Endothelial cell of umbilical vein (primary cell): ENCODE measurements at regions of chr11 and their contacts with region 1.

Region 1: DNA sequence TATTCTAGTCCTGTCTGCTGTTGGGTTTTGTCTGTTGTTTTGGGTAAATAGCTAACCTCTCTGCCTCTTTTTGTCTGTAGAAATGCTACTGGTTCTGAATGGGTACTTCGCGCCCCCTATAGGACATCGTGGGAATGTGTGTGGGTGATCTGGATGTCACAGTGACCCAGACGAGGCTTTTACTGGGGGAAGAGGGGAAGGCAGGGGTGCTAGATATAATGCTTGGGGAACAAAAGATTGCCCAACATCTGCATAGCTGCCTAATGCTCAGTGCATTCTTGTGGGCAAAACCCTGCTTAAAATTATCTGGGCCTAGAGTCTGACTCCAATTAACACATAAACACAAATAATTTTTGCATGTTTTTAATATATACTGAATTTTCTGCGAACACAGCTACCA is 57.7 kb downstream of the BMAL1 start:
- DNase-seq: peak; percentile 61
- H3K4me3 ChIP-seq: no peak overlapping the region
- H3K27ac ChIP-seq: no peak overlapping the region
- H3K4me1 ChIP-seq: peaks cover 27% of the 10 kb centered on the region
- H3K27me3 ChIP-seq: no peaks in the 10 kb centered on the region
- CTCF ChIP-seq: peak; percentile 82 to 91
- POLR2A ChIP-seq: no peak

Region 2: DNA sequence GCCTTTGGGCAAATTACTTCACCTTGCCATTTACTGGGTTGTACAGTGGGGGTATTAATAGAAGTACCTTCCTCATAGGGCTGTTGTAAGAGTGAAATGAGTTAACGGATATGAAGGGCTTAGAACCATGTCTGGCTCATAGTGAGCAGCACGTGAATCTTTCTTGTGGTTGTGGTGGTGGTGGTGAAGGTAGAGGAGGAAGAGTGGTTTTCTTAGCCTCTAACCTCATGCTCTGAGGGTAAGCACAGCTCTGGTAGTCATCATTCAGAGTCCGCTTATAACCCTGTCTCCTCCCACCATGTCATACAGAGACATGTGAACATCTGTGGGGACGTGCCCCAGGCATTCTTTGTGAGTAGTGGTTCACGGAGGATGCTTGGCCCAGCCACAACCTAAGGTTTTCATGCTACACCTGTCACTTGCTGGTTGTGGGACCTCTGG is 617.4 kb before region 1 on chr11:
- CTCF ChIA-PET with region 1: no interaction called
- POLR2A ChIA-PET with region 1: no interaction called
- dilution Hi-C with region 1: no loop called
- intact Hi-C with region 1: no loop called
- DNase-seq: no peak
- H3K4me3 ChIP-seq: no peak overlapping the region
- H3K27ac ChIP-seq: no peak overlapping the region
- H3K4me1 ChIP-seq: peaks cover 19% of the 10 kb centered on the region
- H3K27me3 ChIP-seq: no peaks in the 10 kb centered on the region
- CTCF ChIP-seq: no peak
- POLR2A ChIP-seq: no peak

Region 3: GRCh38 chr11:13105237-13105844 is 230.0 kb before region 1 on chr11:
- CTCF ChIA-PET with region 1: no interaction called
- POLR2A ChIA-PET with region 1: no interaction called
- dilution Hi-C with region 1: no loop called
- intact Hi-C with region 1: loop called (anchors 5 kb)
- DNase-seq: peak; percentile 99
- H3K4me3 ChIP-seq: peak overlapping the region in 1 of 3 experiments; percentile 0
- H3K27ac ChIP-seq: peak overlapping the region; percentile 60
- H3K4me1 ChIP-seq: peaks cover 39% of the 10 kb centered on the region
- H3K27me3 ChIP-seq: no peaks in the 10 kb centered on the region
- CTCF ChIP-seq: no peak
- POLR2A ChIP-seq: peak; percentile 70

Region 4: DNA sequence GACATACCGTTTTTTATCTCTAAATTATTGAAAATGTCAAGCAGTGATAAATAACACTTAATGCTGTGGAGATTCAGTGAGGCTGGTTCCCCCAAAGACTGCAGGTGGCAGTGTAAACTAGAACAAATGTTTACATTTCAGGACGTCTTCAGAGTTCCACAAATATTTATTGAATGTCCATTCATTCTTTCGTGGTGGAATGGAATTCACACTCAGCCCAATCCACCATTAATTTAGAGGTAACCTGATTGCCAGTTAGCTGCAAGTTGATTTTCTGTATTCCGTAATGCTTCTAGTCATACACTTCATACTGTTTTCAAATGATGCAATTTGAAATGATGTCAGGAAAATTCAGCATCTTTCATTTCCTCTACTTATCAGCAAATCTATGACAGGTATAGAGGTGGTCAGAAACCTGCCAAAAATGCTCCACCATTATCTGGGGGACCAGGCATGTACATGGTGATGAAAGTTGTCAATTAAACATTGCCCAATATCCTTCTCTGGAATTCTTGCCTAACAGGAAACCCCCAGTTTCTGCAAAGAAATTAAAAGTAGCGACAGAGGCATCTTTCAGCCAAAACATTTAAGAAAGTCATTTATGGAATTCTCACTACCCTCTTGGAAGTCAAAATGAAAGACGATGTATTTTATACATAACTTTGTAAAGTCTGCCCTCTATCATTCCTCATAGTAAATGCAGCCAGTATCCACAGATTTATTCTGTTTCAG is 152.1 kb before region 1 on chr11:
- CTCF ChIA-PET with region 1: interaction called, 4 read pairs
- POLR2A ChIA-PET with region 1: no interaction called
- dilution Hi-C with region 1: no loop called
- intact Hi-C with region 1: loop called (anchors 2 kb)
- DNase-seq: peak; percentile 56
- H3K4me3 ChIP-seq: no peak overlapping the region
- H3K27ac ChIP-seq: no peak overlapping the region
- H3K4me1 ChIP-seq: peaks cover 6% of the 10 kb centered on the region
- H3K27me3 ChIP-seq: peaks cover 8 to 12% of the 10 kb centered on the region in 2 experiments
- CTCF ChIP-seq: peak; percentile 34 to 46
- POLR2A ChIP-seq: no peak

Region 5: DNA sequence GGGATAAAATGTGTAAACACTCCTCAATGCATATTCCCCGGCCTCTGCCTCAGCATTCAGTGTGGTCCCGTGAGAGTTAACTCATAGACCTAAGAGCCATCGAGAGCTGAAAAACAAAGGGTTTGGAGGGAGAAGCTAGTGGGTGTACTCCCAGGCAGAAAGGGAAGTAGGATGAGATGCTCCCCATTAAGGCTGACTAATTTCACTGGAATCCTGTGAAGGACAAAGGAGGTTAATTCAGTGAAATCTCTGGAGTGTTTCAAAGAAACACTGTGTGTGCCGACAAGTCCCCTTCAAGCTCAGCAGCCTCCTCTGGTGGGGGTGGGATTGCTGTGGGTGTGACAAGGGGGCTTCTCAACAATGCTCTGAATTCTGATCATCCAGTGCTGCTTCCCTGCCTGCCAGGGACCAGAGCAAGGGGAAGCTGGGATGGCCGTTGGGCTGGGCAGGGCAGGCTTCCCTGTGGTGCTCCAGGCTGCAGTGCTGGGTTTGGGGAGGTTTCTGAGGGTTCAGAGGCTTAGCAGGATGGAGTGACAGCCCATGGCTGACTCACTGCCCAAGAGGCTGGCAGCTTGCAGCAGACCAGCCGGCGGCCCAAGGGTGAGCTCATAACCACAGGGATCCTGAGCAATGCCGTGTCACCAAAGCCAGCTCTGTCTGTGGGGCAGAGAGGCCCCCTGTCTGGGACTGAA is 119.2 kb before region 1 on chr11:
- CTCF ChIA-PET with region 1: interaction called, 136 read pairs
- POLR2A ChIA-PET with region 1: no interaction called
- dilution Hi-C with region 1: no loop called
- intact Hi-C with region 1: loop called (anchors 1 kb)
- DNase-seq: peak; percentile 66
- H3K4me3 ChIP-seq: peak overlapping the region in 1 of 3 experiments; percentile 17
- H3K27ac ChIP-seq: peak overlapping the region; percentile 99
- H3K4me1 ChIP-seq: peaks cover 20% of the 10 kb centered on the region
- H3K27me3 ChIP-seq: no peaks in the 10 kb centered on the region
- CTCF ChIP-seq: no peak
- POLR2A ChIP-seq: peak; percentile 53

Region 6: DNA sequence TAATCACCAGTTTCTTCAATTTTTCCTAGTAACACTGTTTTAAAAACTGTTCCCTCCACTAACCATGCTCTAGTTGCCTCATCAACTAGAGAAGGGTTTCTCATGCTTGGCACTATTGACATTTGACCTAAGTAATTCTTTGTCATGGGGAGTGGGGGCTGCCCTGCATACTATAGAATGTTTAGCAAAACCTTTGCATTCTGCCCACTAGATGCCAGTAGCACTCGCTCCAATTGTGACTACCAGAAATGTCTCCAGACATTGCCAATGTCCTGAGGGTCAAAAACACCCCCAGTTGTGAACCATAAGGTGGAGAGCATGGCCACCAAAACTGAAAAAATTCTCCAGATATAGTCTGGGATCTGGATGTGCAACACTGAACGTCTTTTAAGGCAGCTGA is 85.3 kb before region 1 on chr11:
- CTCF ChIA-PET with region 1: interaction called, 22 read pairs
- POLR2A ChIA-PET with region 1: no interaction called
- dilution Hi-C with region 1: no loop called
- intact Hi-C with region 1: loop called (anchors 1 kb)
- DNase-seq: peak; percentile 3
- H3K4me3 ChIP-seq: no peak overlapping the region
- H3K27ac ChIP-seq: no peak overlapping the region
- H3K4me1 ChIP-seq: no peaks in the 10 kb centered on the region
- H3K27me3 ChIP-seq: peaks cover 24 to 25% of the 10 kb centered on the region in 2 experiments
- CTCF ChIP-seq: no peak
- POLR2A ChIP-seq: no peak

Region 7: GRCh38 chr11:13276832-13277767 is 58.2 kb before region 1 on chr11:
- CTCF ChIA-PET with region 1: interaction called, 7 read pairs
- POLR2A ChIA-PET with region 1: no interaction called
- dilution Hi-C with region 1: no loop called
- intact Hi-C with region 1: loop called (anchors 2 kb)
- DNase-seq: peak; percentile 98
- H3K4me3 ChIP-seq: peak overlapping the region; percentile 60 to 88 (median 81)
- H3K27ac ChIP-seq: no peak overlapping the region
- H3K4me1 ChIP-seq: peaks cover 13% of the 10 kb centered on the region
- H3K27me3 ChIP-seq: peaks cover 52 to 64% of the 10 kb centered on the region in 2 experiments
- CTCF ChIP-seq: no peak
- POLR2A ChIP-seq: no peak

Region 8: GRCh38 chr11:13378316-13378715 is 43.0 kb after region 1 on chr11:
- CTCF ChIA-PET with region 1: no interaction called
- POLR2A ChIA-PET with region 1: no interaction called
- dilution Hi-C with region 1: no loop called
- intact Hi-C with region 1: no loop called
- DNase-seq: no peak
- H3K4me3 ChIP-seq: no peak overlapping the region
- H3K27ac ChIP-seq: no peak overlapping the region
- H3K4me1 ChIP-seq: peaks cover 16% of the 10 kb centered on the region
- H3K27me3 ChIP-seq: no peaks in the 10 kb centered on the region
- CTCF ChIP-seq: no peak
- POLR2A ChIP-seq: no peak